PC-3 (cell line): ENCODE measurements at regions of chr2 and their contacts with region 1.

Region 1: GRCh38 chr2:234203135-234203984 is 152.9 kb downstream of the SPP2 start:
- DNase-seq: peak; percentile 97
- ATAC-seq: peak; percentile 97
- H3K4me3 ChIP-seq: peak overlapping the region; percentile 39
- H3K27ac ChIP-seq: peak overlapping the region; percentile 89
- H3K4me1 ChIP-seq: peaks cover 32% of the 10 kb centered on the region
- H3K27me3 ChIP-seq: no peaks in the 10 kb centered on the region
- CTCF ChIP-seq: no peak

Region 2: GRCh38 chr2:234241656-234242458 is 38.5 kb after region 1 on chr2:
- CTCF ChIA-PET with region 1: no interaction called
- POLR2A ChIA-PET with region 1: no interaction called
- intact Hi-C with region 1: loop called (anchors 1 kb)
- DNase-seq: peak; percentile 96
- ATAC-seq: peak; percentile 68
- H3K4me3 ChIP-seq: peak overlapping the region; percentile 48; the same call in 1 of the 2 replicates
- H3K27ac ChIP-seq: peak overlapping the region; percentile 99
- H3K4me1 ChIP-seq: peaks cover 61% of the 10 kb centered on the region
- H3K27me3 ChIP-seq: no peaks in the 10 kb centered on the region
- CTCF ChIP-seq: no peak

Region 3: GRCh38 chr2:234251326-234252271 is 48.2 kb after region 1 on chr2:
- CTCF ChIA-PET with region 1: no interaction called
- POLR2A ChIA-PET with region 1: no interaction called
- intact Hi-C with region 1: loop called (anchors 2 kb)
- DNase-seq: peak; percentile 97
- ATAC-seq: peak; percentile 74
- H3K4me3 ChIP-seq: peak overlapping the region; percentile 7; the same call in 1 of the 2 replicates
- H3K27ac ChIP-seq: peak overlapping the region; percentile 91
- H3K4me1 ChIP-seq: peaks cover 60% of the 10 kb centered on the region
- H3K27me3 ChIP-seq: no peaks in the 10 kb centered on the region
- CTCF ChIP-seq: no peak

Region 4: GRCh38 chr2:234308813-234309195 is 105.4 kb after region 1 on chr2:
- CTCF ChIA-PET with region 1: no interaction called
- POLR2A ChIA-PET with region 1: no interaction called
- intact Hi-C with region 1: loop called (anchors 5 kb)
- DNase-seq: peak; percentile 92
- ATAC-seq: peak; percentile 90
- H3K4me3 ChIP-seq: no peak overlapping the region
- H3K27ac ChIP-seq: peak overlapping the region; percentile 98
- H3K4me1 ChIP-seq: peaks cover 40% of the 10 kb centered on the region
- H3K27me3 ChIP-seq: no peaks in the 10 kb centered on the region
- CTCF ChIP-seq: no peak

Region 5: GRCh38 chr2:234643407-234643806 is 440.0 kb after region 1 on chr2:
- CTCF ChIA-PET with region 1: no interaction called
- POLR2A ChIA-PET with region 1: no interaction called
- intact Hi-C with region 1: no loop called
- DNase-seq: no peak
- ATAC-seq: no peak
- H3K4me3 ChIP-seq: no peak overlapping the region
- H3K27ac ChIP-seq: no peak overlapping the region
- H3K4me1 ChIP-seq: no peaks in the 10 kb centered on the region
- H3K27me3 ChIP-seq: no peaks in the 10 kb centered on the region
- CTCF ChIP-seq: no peak